WTC11 (cell line): ENCODE measurements at regions of chr22 and their contacts with region 1.

Region 1: DNA sequence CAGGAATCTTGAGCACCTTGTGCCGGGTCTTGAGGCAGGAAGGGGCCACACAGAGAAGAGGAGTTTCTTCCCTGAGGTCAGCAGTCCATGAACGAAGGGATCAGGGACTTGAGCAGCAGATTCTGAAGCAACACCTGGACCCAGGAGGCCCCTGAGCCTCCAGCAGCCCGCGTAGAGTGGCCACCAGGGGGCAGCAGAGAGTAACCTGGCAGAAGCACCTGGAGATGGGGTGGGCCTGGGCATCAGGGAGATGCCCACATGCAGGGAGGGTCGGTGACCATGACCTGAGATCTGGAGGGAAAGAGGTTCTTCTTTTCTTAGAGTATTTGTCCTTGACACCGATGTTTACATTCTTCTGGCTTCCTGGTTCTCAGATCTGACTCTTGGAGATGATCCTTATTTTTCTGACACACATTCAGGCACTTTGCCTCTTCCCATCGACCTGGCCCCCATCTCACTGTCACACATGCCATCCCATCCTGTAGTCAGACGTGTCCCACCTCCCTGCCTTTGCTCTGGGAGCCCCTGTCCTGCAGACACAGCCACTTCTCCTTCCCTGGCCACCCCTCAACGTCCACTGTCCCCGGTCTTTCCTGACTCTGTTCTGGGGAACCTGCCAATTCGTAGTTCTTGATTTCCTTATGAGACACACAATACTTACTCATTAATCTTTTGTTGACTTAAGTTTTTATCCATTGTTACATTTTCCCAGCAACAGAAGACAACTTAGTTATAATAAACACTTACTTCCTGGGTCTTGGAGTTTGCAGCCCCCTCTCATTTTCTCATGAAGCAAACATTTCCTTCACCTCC is 66.5 kb downstream of the GGTLC2 start:
- DNase-seq: peak; percentile 83
- ATAC-seq: peak; percentile 77
- H3K4me3 Mint-ChIP-seq: no peak overlapping the region
- H3K27ac Mint-ChIP-seq: no peak overlapping the region
- H3K4me1 Mint-ChIP-seq: no peaks in the 10 kb centered on the region
- H3K27me3 Mint-ChIP-seq: peaks cover 99% of the 10 kb centered on the region
- CTCF ChIP-seq: peak; percentile 96

Region 2: GRCh38 chr22:22479999-22480532 is 230.9 kb before region 1 on chr22:
- CTCF ChIA-PET with region 1: no interaction called
- POLR2A ChIA-PET with region 1: no interaction called
- DNase-seq: no peak
- ATAC-seq: no peak
- H3K4me3 Mint-ChIP-seq: no peak overlapping the region
- H3K27ac Mint-ChIP-seq: no peak overlapping the region
- H3K4me1 Mint-ChIP-seq: no peaks in the 10 kb centered on the region
- H3K27me3 Mint-ChIP-seq: peaks cover 74% of the 10 kb centered on the region
- CTCF ChIP-seq: no peak

Region 3: DNA sequence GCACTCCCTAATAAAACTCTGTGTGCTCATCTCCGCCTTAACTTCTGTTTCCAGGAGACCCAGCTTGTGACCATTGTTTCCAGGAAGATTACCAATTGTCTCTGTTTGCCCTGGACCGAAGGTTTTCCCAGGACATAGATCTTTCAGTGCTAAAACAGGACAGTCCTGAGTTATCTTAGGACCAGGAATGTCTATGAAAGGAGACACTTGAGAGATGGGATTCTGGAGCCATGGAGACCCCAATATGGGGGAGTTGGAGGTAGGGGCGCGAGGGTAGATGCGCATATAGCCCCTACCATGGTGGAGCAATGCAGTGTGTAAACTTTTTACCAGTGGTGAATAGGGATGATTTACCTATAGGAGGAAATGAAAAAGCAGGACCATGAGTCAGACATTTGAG is 141.7 kb before region 1 on chr22:
- CTCF ChIA-PET with region 1: no interaction called
- POLR2A ChIA-PET with region 1: no interaction called
- DNase-seq: no peak
- ATAC-seq: no peak
- H3K4me3 Mint-ChIP-seq: no peak overlapping the region
- H3K27ac Mint-ChIP-seq: no peak overlapping the region
- H3K4me1 Mint-ChIP-seq: no peaks in the 10 kb centered on the region
- H3K27me3 Mint-ChIP-seq: peaks cover 99% of the 10 kb centered on the region
- CTCF ChIP-seq: no peak

Region 4: DNA sequence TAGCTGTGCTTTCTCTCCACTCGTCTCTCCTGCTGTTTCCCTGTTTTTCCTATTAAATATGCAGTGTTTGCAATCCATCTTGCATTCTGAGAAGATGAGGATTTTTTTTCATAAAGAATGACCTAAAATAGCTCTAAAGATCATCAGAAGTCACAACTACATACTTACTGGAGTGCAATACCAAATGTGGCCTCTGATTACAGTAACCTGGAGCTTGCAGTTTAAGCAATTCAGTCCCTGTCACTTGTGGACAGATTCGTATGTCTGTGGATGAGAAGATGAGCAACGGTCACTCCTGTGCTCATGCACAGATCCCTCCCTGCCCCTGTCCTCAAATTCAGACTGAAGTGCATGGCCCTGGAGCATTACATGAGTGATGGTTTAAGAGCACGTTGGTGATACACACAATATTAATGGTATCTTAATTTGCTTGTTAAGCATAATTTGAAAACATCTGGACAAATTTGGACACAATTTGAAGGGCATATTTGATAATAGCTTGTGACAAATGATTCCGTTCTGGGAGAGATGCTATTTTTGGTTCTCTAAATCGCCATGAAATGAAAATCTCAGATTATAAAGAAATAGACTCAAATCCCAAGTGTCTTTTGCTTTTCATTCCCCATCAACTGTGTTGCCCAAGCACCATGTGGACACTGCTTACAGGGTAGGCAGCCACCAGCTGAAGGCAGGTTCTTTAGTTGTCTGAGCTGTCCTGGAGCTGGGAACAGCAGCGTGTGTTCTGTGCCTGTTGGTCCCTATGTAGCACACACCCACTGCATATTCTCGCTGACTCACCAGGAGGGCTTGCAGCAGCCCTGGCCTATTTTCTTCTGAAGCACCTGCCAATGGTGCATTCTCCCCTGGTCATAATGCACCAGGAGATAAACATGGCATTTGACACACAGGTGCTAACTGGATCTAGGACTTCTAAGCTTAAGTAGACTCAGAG is 119.3 kb before region 1 on chr22:
- CTCF ChIA-PET with region 1: interaction called, 17 read pairs
- POLR2A ChIA-PET with region 1: no interaction called
- DNase-seq: no peak
- ATAC-seq: no peak
- H3K4me3 Mint-ChIP-seq: no peak overlapping the region
- H3K27ac Mint-ChIP-seq: no peak overlapping the region
- H3K4me1 Mint-ChIP-seq: no peaks in the 10 kb centered on the region; the same call in 1 of the 2 replicates
- H3K27me3 Mint-ChIP-seq: peaks cover 93% of the 10 kb centered on the region
- CTCF ChIP-seq: no peak

Region 5: GRCh38 chr22:22673628-22674027 is 37.3 kb before region 1 on chr22:
- CTCF ChIA-PET with region 1: no interaction called
- POLR2A ChIA-PET with region 1: no interaction called
- DNase-seq: no peak
- ATAC-seq: no peak
- H3K4me3 Mint-ChIP-seq: no peak overlapping the region
- H3K27ac Mint-ChIP-seq: no peak overlapping the region
- H3K4me1 Mint-ChIP-seq: no peaks in the 10 kb centered on the region
- H3K27me3 Mint-ChIP-seq: peaks cover 100% of the 10 kb centered on the region
- CTCF ChIP-seq: no peak

Region 6: GRCh38 chr22:22687638-22688500 is 23.1 kb before region 1 on chr22:
- CTCF ChIA-PET with region 1: interaction called, 27 read pairs
- POLR2A ChIA-PET with region 1: no interaction called
- DNase-seq: peak; percentile 24
- ATAC-seq: peak; percentile 82
- H3K4me3 Mint-ChIP-seq: no peak overlapping the region
- H3K27ac Mint-ChIP-seq: no peak overlapping the region
- H3K4me1 Mint-ChIP-seq: peaks cover 4% of the 10 kb centered on the region; the same call in 1 of the 2 replicates
- H3K27me3 Mint-ChIP-seq: peaks cover 95% of the 10 kb centered on the region
- CTCF ChIP-seq: peak; percentile 39

Region 7: DNA sequence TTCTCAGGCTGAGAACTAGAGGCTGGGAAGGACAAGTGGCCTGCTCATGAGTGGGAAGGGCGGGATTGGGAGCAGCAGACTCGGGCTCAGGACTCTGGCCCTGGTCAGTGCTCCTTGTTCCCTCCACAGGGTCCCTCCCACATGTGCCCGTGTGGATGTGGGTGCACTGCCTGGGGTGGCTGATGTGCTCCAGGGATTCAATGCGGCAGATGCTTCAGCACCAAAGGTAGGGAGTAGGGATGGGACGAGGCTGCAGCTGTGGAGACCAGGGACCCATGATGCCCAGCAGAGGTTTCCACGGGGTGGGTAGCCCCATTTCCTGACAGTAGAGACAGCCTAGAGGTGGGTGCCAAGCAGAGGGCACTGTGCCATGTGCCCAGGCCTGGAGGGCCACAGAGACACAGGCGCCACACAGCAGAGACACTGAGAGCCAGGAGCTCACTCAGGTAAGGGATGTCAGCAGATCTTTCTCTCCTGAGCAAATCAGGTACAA is 23.0 kb after region 1 on chr22:
- CTCF ChIA-PET with region 1: interaction called, 10 read pairs
- POLR2A ChIA-PET with region 1: no interaction called
- DNase-seq: no peak
- ATAC-seq: no peak
- H3K4me3 Mint-ChIP-seq: no peak overlapping the region
- H3K27ac Mint-ChIP-seq: no peak overlapping the region
- H3K4me1 Mint-ChIP-seq: peaks cover 13% of the 10 kb centered on the region
- H3K27me3 Mint-ChIP-seq: peaks cover 98% of the 10 kb centered on the region
- CTCF ChIP-seq: no peak

Region 8: GRCh38 chr22:22770280-22770871 is 59.5 kb after region 1 on chr22:
- CTCF ChIA-PET with region 1: interaction called, 23 read pairs
- POLR2A ChIA-PET with region 1: no interaction called
- DNase-seq: peak; percentile 84
- ATAC-seq: peak; percentile 88
- H3K4me3 Mint-ChIP-seq: no peak overlapping the region
- H3K27ac Mint-ChIP-seq: no peak overlapping the region
- H3K4me1 Mint-ChIP-seq: no peaks in the 10 kb centered on the region
- H3K27me3 Mint-ChIP-seq: peaks cover 99% of the 10 kb centered on the region
- CTCF ChIP-seq: peak; percentile 73; the same call in 1 of the 2 replicates